Activated T-helper 2 cell treated with anti-CD3 and anti-CD28 coated beads, Interferon-gamma antibody, Interleukin-2, Interleukin-4, amounts not matched to agents 10 μg/mL and 5 μg/mL and 100 μg/mL, durations not matched to agents 14 hours and 24 hours and 36 hours (primary cell): ENCODE measurements at regions of chr2 and their contacts with region 1.

Region 1: DNA sequence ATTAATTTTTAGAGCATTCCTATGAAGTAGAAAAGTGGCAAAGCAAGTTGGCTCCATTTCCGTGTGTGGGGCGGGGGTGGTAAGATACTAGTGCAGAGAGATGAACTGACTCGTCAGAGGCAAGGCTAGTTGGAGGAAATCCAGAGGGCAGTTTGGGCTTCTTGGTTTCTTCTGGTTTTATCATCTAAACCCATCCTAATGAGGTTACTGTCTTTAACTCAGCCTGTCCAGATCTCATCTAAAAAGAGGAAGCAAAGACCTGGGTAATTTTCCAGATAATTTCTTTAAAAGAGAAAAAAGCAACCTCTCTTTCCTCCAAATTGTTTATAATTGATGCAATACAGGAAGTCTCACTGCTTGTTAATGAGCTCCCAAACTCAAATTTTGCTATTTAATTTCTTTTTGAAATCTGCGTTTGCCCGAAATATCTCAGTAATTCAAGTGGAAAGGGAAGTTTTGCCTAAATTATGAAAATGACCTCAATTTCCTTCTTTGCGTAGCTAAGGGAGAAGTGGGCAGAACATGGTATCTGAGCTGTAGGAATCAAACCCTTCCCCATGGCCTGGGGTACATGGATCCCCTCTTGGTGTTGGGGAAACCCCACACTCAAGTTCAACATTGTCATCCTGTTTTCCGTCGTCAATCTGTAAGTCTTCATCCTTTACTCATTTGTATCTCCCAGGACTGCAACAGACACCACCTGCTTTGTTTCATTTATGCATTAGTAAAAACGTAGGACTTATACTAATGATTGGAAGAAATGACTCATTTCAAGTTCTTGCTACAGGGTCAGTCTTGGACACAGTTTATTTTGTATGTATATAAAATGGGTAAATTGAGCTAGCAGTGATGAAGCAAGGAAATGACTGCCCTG is 89.1 kb upstream of the KLF7 start:
- DNase-seq: no peak
- H3K4me3 Mint-ChIP-seq: no peak overlapping the region
- H3K27ac Mint-ChIP-seq: peak overlapping the region; percentile 81
- H3K4me1 Mint-ChIP-seq: peaks cover 69% of the 10 kb centered on the region
- H3K27me3 Mint-ChIP-seq: no peaks in the 10 kb centered on the region

Region 2: DNA sequence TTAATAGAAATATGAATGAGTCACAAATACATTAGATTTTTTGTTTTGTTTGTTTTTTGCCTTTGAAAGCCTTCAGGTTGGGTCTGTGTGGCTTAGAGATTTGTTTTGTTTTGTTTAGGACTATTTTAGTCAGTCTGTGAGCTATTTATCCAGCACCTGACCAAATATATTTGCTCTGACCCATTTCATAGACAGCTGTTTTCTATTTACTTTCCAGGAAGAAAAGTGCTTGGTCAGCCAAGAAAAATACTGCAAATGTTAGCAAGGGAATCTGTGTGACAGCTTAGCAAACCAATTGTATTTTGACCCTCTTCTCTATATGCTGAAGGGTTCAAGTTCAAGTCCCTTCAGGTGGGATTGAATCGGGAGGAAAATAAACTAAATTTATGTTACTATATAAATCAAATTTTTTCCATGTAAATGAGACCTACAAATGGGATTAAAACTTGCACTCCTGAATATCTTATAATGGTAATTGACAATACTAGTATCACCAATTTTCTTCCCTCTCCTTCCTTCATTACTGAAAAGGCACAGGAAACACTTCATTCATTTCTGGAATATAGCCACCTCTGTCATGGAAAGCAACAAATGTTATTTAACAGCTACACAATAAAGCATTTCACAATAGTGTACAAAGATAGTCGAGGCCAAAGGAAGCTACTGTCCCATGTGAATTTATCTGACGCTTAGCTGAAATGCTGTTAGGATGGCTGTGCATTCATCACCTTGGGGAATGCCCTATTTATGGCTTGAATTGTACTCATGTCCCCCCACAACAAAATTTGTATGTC is 66.0 kb before region 1 on chr2:
- intact Hi-C with region 1: no loop called
- DNase-seq: no peak
- H3K4me3 Mint-ChIP-seq: no peak overlapping the region
- H3K27ac Mint-ChIP-seq: no peak overlapping the region
- H3K4me1 Mint-ChIP-seq: peaks cover 10% of the 10 kb centered on the region
- H3K27me3 Mint-ChIP-seq: peaks cover 2% of the 10 kb centered on the region

Region 3: GRCh38 chr2:207283356-207283755 is 28.5 kb after region 1 on chr2:
- intact Hi-C with region 1: loop called (anchors 1 kb)
- DNase-seq: no peak
- H3K4me3 Mint-ChIP-seq: peak overlapping the region; percentile 55
- H3K27ac Mint-ChIP-seq: peak overlapping the region; percentile 82
- H3K4me1 Mint-ChIP-seq: peaks cover 67% of the 10 kb centered on the region
- H3K27me3 Mint-ChIP-seq: no peaks in the 10 kb centered on the region

Region 4: GRCh38 chr2:207311316-207312005 is 56.6 kb after region 1 on chr2:
- intact Hi-C with region 1: loop called (anchors 1 kb)
- DNase-seq: no peak
- H3K4me3 Mint-ChIP-seq: no peak overlapping the region
- H3K27ac Mint-ChIP-seq: peak overlapping the region; percentile 68
- H3K4me1 Mint-ChIP-seq: peaks cover 55% of the 10 kb centered on the region
- H3K27me3 Mint-ChIP-seq: no peaks in the 10 kb centered on the region

Region 5: GRCh38 chr2:207317378-207317984 is 62.7 kb after region 1 on chr2:
- intact Hi-C with region 1: loop called (anchors 1 kb)
- DNase-seq: no peak
- H3K4me3 Mint-ChIP-seq: no peak overlapping the region
- H3K27ac Mint-ChIP-seq: peak overlapping the region; percentile 77
- H3K4me1 Mint-ChIP-seq: peaks cover 64% of the 10 kb centered on the region
- H3K27me3 Mint-ChIP-seq: no peaks in the 10 kb centered on the region